ENCODE measurements at regions of chr18 and their contacts with region 1.

Region 1: DNA sequence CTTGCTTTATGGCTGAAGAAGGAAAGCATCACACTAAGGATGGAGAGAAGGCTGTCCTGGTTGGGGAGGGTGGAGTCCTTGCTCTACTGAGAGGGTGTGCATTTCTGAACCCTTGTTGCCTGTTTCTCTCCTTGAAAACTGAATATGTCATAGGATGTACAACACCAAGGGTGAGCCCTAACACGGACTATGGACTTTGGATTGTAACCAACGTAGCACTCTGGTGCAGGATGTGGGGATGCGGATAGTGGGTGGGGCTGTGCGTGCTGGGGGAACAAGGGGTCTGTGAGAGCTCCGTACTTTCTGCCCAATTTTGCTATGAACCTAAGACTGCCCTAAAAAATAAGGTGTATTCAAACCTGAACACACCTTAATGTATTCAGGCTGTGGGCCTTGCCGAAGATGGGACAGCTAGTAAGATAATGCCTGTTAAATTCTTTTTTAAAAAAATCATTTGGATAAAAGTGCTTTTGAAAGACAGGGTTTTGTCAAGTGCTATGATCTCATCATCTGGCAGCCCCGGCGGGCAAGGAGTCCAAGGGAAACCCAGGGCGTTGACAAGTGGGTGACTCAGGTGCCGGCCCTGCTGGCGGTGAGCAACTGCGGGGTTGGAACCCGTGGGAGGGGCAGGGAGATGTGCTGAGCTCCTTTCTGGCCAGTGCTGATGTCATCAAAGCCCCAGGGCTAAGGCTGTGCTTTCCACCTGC is 54.0 kb downstream of the GATA6 start:
- DNase-seq: peak in 2 of 14 experiments; percentile 5 to 18
- ATAC-seq: no peak
- H3K4me3 ChIP-seq: no peak overlapping the region
- H3K4me3 Mint-ChIP-seq: no peak overlapping the region
- H3K27ac ChIP-seq: no peak overlapping the region
- H3K27ac Mint-ChIP-seq: no peak overlapping the region
- H3K4me1 ChIP-seq: no peaks in the 10 kb centered on the region
- H3K4me1 Mint-ChIP-seq: no peaks in the 10 kb centered on the region
- H3K27me3 ChIP-seq: no peaks in the 10 kb centered on the region
- H3K27me3 Mint-ChIP-seq: peaks cover 5% of the 10 kb centered on the region
- CTCF ChIP-seq: no peak

Region 2: DNA sequence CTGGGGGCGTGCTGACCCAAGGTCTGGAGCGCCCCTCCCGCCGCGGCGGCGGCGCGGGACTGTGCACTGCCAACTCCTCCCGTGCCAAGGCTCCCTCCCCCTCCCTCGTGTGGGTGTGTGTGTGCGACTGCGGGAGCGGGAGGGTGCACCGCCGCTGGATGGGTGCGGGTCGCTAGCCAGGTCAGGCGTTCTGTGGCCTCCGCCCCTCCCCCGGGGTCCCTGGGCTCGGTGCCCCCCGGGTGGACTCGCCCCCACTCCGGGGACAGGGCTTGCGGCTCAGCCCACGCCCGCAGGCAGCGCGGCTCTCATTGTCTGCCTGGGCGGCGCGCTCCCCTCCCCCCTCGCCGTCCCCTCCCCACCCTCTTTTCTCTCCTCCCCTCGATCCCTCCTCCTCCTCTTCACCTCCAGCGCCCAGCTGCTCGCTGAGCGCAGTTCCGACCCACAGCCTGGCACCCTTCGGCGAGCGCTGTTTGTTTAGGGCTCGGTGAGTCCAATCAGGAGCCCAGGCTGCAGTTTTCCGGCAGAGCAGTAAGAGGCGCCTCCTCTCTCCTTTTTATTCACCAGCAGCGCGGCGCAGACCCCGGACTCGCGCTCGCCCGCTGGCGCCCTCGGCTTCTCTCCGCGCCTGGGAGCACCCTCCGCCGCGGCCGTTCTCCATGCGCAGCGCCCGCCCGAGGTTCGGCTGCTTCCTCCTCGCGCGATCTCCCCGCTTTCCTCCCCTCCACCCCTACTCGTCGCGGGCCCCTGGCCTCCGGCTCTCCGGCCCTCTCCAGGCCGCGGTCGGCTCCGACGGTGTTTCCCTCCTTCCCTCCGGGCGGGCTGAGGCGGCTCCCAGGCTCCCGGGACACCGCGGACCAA is 54.2 kb before region 1 on chr18 and contains the start of gene GATA6:
- CTCF ChIA-PET with region 1: no interaction called
- POLR2A ChIA-PET with region 1: no interaction called
- intact Hi-C with region 1: loop called in 1 of 2 experiments (anchors 10 kb)
- DNase-seq: peak in 5 of 14 experiments; percentile 11 to 63 (median 51)
- ATAC-seq: peak; percentile 57
- H3K4me3 ChIP-seq: peak within 1 kb of the TSS; percentile 51
- H3K4me3 Mint-ChIP-seq: peak within 1 kb of the TSS; percentile 82
- H3K27ac ChIP-seq: no peak within 1 kb of the TSS
- H3K27ac Mint-ChIP-seq: no peak within 1 kb of the TSS
- H3K4me1 ChIP-seq: peaks cover 48% of the 10 kb centered on the region
- H3K4me1 Mint-ChIP-seq: peaks cover 13% of the 10 kb centered on the region
- H3K27me3 ChIP-seq: peaks cover 69 to 91% of the 10 kb centered on the region in 2 experiments
- H3K27me3 Mint-ChIP-seq: peaks cover 80% of the 10 kb centered on the region
- CTCF ChIP-seq: no peak
- total RNA-seq, gene GATA6: 0.08 to 0.14 TPM